Esophagus muscularis mucosa (tissue), 4 donors: ENCODE measurements at regions of chr14 and their contacts with region 1.

Region 1: DNA sequence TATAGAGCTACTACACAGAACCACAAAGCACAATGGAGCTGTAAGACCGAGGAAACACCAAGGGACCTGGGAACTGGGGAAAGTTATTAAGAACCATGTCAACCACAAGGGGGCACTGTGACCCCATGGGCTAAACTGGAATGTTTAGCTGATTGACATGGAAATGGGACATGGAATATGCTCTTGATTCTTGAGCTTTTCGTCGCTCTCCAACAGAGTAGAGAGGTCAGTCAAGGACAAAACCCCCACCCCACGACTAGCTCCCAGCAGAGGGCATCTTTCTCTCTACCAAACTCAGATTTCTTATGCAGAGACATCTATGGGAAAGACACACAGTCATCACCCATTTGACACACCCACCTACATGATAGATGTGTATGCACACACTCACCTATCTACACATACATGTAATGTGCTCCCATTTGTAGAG is 10.1 kb downstream of the NDRG2 start:
- DNase-seq: peak; percentile 95
- H3K4me3 ChIP-seq: no peak overlapping the region
- H3K27ac ChIP-seq: peak overlapping the region in 1 of 4 donors; percentile 15
- H3K4me1 ChIP-seq: peaks cover 0 to 28% (median 15%) of the 10 kb centered on the region in 4 donors
- H3K27me3 ChIP-seq: no peaks in the 10 kb centered on the region
- CTCF ChIP-seq: peak; percentile 90 to 92 (median 91)
- EP300 ChIP-seq: no peak
- POLR2A ChIP-seq: no peak

Region 2: GRCh38 chr14:21039585-21040369 is 25.0 kb after region 1 on chr14:
- intact Hi-C with region 1: loop called (anchors 1 kb)
- DNase-seq: no peak
- H3K4me3 ChIP-seq: peak overlapping the region in 2 of 4 donors; percentile 4 to 24
- H3K27ac ChIP-seq: peak overlapping the region; percentile 74 to 81 (median 77)
- H3K4me1 ChIP-seq: peaks cover 44 to 48% (median 44%) of the 10 kb centered on the region in 4 donors
- H3K27me3 ChIP-seq: no peaks in the 10 kb centered on the region
- CTCF ChIP-seq: peak; percentile 77 to 82 (median 81)
- EP300 ChIP-seq: no peak
- POLR2A ChIP-seq: no peak

Region 3: DNA sequence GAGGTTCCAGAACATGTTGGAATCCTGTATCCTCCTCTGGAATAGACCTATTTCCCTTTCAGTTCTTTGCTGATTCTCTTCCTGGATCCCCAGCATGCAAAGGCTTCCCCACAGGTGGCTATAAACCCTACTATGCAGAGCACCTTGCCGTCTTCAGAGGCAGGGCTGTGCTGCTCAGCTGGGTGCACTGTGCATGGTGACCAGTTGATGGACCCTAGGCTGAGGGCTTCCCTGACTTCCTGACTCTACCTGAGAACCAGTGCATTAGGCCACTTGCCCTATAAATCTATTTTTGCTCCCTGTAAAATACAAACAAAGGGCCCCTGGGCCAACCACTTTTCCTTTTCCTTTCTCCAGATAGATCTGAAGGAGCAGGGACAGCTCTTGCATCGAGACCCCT is 69.6 kb after region 1 on chr14:
- intact Hi-C with region 1: no loop called
- DNase-seq: no peak
- H3K4me3 ChIP-seq: no peak overlapping the region
- H3K27ac ChIP-seq: peak overlapping the region in 2 of 4 donors; percentile 45 to 64
- H3K4me1 ChIP-seq: peaks cover 9 to 29% (median 16%) of the 10 kb centered on the region in 4 donors
- H3K27me3 ChIP-seq: no peaks in the 10 kb centered on the region
- CTCF ChIP-seq: no peak
- EP300 ChIP-seq: no peak
- POLR2A ChIP-seq: no peak

Region 4: DNA sequence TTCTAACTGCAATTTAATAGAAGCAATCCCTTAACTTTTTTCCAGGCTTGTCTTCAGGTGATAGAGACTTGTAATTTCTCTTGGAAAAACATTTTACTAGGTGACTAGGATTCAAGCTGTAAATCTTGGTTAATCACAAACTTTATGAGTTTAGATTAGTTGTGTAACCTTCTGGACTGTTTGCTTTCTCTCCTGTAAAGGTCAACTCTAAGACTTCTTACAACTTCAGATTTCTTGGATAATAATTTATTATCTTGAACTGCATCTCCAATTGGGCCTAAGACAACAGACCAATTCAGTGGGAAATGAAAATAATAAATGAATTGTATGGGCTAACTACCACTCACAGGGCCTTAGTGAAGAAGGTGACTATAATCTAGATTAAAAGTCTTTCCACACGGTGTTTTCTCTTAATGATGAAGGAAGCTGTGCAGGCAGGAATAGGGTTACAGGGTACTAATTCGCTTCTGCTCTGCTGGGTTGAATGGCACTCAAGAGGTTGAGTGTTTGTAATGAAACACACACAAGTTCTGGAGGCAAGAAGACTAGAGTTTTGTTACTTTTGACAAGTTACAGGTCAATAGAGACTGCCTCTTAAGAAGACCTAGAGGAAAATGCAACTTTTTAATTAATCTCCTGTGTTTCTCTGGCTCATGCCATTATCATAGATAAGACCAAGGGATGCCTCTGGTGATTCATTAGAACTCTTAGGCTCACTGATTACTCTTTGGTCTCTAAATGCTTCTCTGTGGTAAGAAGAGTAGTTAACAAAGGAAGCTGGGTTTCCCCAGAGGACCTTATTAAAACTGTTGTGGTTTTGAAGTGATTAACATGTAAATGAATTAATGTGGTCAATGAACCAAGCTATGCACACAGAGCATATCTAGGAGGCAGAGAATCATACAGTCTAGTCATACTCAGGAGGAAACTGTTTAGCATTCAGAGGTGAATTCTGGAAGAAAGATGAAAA is 688.9 kb after region 1 on chr14:
- intact Hi-C with region 1: no loop called
- DNase-seq: no peak
- H3K4me3 ChIP-seq: no peak overlapping the region
- H3K27ac ChIP-seq: no peak overlapping the region
- H3K4me1 ChIP-seq: no peaks in the 10 kb centered on the region
- H3K27me3 ChIP-seq: no peaks in the 10 kb centered on the region
- CTCF ChIP-seq: no peak
- EP300 ChIP-seq: no peak
- POLR2A ChIP-seq: no peak

Region 5: GRCh38 chr14:22099942-22100763 is 1085.4 kb after region 1 on chr14:
- intact Hi-C with region 1: no loop called
- DNase-seq: no peak
- H3K4me3 ChIP-seq: no peak overlapping the region
- H3K27ac ChIP-seq: no peak overlapping the region
- H3K4me1 ChIP-seq: peaks cover 0 to 19% (median 3%) of the 10 kb centered on the region in 4 donors
- H3K27me3 ChIP-seq: peaks cover 0 to 3% (median 0%) of the 10 kb centered on the region in 4 donors
- CTCF ChIP-seq: peak; percentile 30 to 48 (median 34)
- EP300 ChIP-seq: no peak
- POLR2A ChIP-seq: no peak